Psoas muscle (tissue), 8 donors: ENCODE measurements at regions of chr6 and their contacts with region 1.

Region 1: GRCh38 chr6:123489589-123489988 is 147.2 kb downstream of the TRDN start:
- DNase-seq: no peak
- ATAC-seq: peak in 2 of 4 donors; percentile 43 to 46
- H3K4me3 ChIP-seq: no peak overlapping the region
- H3K27ac ChIP-seq: peak overlapping the region; percentile 43
- H3K4me1 ChIP-seq: peaks cover 34% of the 10 kb centered on the region
- H3K27me3 ChIP-seq: no peaks in the 10 kb centered on the region
- CTCF ChIP-seq: no peak

Region 2: GRCh38 chr6:123462152-123462551 is 27.4 kb before region 1 on chr6:
- intact Hi-C with region 1: loop called in 1 of 2 experiments (anchors 2 kb)
- DNase-seq: no peak
- ATAC-seq: no peak
- H3K4me3 ChIP-seq: no peak overlapping the region
- H3K27ac ChIP-seq: peak overlapping the region; percentile 25
- H3K4me1 ChIP-seq: peaks cover 7% of the 10 kb centered on the region
- H3K27me3 ChIP-seq: no peaks in the 10 kb centered on the region
- CTCF ChIP-seq: no peak